RWPE1 (cell line): ENCODE measurements at regions of chr6 and their contacts with region 1.

Region 1: GRCh38 chr6:56790414-56790813 is 147.7 kb upstream of the DST start:
- DNase-seq: no peak
- H3K27ac ChIP-seq: no peak overlapping the region
- CTCF ChIP-seq: no peak

Region 2: GRCh38 chr6:56766806-56767190 is 23.6 kb before region 1 on chr6:
- CTCF ChIA-PET with region 1: no interaction called
- POLR2A ChIA-PET with region 1: interaction called, 14 read pairs
- DNase-seq: peak; percentile 51
- H3K27ac ChIP-seq: no peak overlapping the region
- CTCF ChIP-seq: no peak